SK-N-SH (cell line): ENCODE measurements at regions of chr19 and their contacts with region 1.

Region 1: DNA sequence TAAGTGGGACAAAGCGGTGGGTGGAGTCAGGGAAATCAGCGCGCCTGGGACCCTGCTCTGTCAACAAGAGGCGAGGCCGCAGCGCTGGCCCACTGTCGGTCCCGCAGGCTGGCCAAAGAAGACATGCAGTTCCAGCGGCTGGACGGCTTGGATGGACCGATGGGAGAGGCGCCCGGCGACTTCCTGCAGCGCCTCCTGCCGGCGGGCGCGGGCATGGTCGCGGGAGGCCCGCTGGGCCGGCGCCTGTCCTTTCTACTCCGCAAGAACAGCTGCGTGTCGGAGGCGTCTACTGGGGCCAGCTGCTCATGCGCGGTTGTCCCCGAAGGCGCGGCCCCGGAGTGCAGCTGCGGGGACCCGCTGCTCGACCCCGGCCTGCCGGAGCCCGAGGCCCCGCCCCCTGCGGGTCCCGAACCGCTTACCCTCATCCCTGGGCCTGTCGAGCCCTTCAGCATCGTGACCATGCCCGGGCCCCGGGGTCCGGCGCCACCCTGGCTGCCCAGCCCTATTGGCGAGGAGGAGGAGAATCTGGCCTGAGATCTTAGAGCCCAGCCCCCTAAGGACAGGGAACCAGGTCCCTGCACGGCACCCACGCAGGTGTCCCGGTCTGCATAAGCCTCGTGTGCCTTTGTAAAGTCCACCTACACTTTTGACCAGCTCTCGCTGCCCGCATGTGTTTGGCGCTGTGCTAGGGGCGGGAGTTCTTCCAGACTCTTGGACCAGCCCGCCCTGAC is 6.1 kb downstream of the BEST2 start:
- DNase-seq: peak; percentile 94
- H3K4me3 ChIP-seq: peak overlapping the region; percentile 31 to 44; a peak in 3 of 4 replicates
- H3K27ac ChIP-seq: no peak overlapping the region
- H3K4me1 ChIP-seq: no peaks in the 10 kb centered on the region; a peak in 1 of 4 replicates
- H3K27me3 ChIP-seq: peaks cover 12% of the 10 kb centered on the region; the same call in 1 of the 2 replicates
- CTCF ChIP-seq: peak; percentile 84
- EP300 ChIP-seq: no peak
- RAD21 ChIP-seq: peak; percentile 60

Region 2: GRCh38 chr19:12722566-12723380 is 34.9 kb before region 1 on chr19:
- CTCF ChIA-PET with region 1: interaction called, 24 read pairs
- POLR2A ChIA-PET with region 1: no interaction called
- DNase-seq: peak; percentile 96
- H3K4me3 ChIP-seq: peak overlapping the region; percentile 63 to 85
- H3K27ac ChIP-seq: peak overlapping the region; percentile 89
- H3K4me1 ChIP-seq: peaks cover 7 to 8% of the 10 kb centered on the region in 2 experiments; a peak in 3 of 4 replicates
- H3K27me3 ChIP-seq: no peaks in the 10 kb centered on the region
- CTCF ChIP-seq: no peak
- EP300 ChIP-seq: no peak
- RAD21 ChIP-seq: no peak

Region 3: GRCh38 chr19:12736995-12737834 is 20.5 kb before region 1 on chr19 and contains the start of gene GET3:
- CTCF ChIA-PET with region 1: interaction called, 273 read pairs
- POLR2A ChIA-PET with region 1: interaction called, 3 read pairs
- DNase-seq: peak; percentile 86
- H3K4me3 ChIP-seq: peak within 1 kb of the TSS; percentile 83 to 84
- H3K27ac ChIP-seq: peak within 1 kb of the TSS; percentile 84 to 96
- H3K4me1 ChIP-seq: peaks cover 9 to 28% of the 10 kb centered on the region in 2 experiments; a peak in 1 of 4 replicates
- H3K27me3 ChIP-seq: no peaks in the 10 kb centered on the region
- CTCF ChIP-seq: no peak
- EP300 ChIP-seq: no peak
- RAD21 ChIP-seq: no peak
- polyA plus RNA-seq, gene GET3: 250 and 264 TPM in 2 replicates

Region 4: DNA sequence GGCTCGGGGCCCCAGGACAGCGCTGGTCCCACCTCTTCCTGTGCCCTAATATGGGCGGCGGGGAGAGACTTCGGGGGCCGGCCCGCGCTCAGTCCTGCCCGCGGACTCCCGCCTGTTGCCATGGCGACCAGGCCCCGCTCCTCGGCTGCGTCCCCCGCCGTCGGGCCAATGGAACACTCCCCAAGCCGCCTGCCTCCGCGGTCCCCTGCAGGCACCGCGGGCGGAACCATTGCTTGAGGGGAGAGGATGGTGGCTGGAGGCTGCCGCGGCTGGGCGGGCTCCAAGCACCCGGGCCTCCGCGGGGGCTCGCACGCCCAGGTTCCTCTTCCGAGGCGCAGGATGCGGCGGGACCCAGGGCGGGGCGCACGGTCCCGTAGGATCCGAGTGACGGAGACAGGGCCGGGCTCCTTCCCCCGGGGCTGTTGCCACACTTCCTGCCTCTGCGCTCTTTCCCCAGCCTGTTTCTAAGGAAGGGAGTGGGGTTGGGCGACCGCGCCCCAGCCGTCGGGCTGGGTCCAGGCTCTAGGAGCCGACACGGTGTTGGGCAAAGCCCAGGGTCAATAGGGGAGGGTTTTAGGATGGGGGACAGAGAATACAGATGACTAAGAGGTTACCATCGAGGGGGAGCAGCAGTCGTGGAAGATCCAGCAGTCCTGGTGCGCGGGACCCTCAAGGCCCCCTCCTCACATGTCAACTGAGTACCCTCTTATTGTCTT is 32.4 kb after region 1 on chr19:
- CTCF ChIA-PET with region 1: interaction called, 321 read pairs
- POLR2A ChIA-PET with region 1: interaction called, 3 read pairs
- DNase-seq: peak; percentile 92
- H3K4me3 ChIP-seq: peak overlapping the region; percentile 55 to 80
- H3K27ac ChIP-seq: peak overlapping the region; percentile 96 to 97
- H3K4me1 ChIP-seq: peaks cover 38 to 53% of the 10 kb centered on the region in 2 experiments
- H3K27me3 ChIP-seq: no peaks in the 10 kb centered on the region
- CTCF ChIP-seq: no peak
- EP300 ChIP-seq: no peak
- RAD21 ChIP-seq: no peak

Region 5: DNA sequence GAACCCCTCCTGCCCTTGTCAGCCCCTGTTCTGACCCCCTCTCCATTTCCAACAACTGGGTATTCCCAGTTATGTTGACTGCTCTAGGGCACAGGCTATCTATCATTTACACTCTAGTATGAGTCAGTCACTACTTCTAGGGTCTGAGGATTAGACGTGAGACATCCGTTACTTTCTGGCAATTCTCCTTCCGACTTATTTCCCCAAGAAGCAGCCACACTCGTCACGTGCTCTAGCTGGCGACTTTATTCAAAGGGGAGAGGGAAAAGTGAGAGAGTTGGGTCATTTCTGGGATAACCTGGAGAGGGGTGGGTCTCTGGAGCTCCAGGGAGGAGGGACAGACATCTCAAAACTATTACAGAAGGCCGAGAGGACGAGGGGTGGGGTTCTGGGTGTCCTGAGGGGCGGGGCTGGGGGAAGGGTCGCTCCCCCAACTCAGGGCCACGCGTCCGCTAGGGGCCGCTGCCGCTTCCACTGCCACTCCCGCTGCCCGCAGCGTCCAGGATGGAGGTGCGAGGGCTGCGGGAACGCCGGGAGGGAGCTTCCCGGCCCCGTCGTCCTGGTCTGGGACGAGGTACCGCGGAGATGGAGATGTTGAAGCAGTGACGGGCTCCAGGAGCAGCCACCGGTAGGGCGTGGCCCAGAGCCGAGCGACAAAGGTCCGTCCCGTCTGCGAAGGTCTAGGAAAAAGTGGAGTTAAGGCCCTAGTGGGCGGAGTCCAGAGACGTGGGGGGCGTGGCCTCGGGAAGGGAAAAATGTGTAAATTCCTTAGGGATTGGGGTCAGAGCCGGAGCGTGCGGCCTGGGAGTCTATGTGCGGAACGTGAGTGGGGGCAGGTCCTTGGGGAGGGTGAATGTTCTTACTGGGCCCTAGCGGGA is 67.8 kb after region 1 on chr19:
- CTCF ChIA-PET with region 1: interaction called, 12 read pairs
- POLR2A ChIA-PET with region 1: no interaction called
- DNase-seq: peak; percentile 88
- H3K4me3 ChIP-seq: peak overlapping the region in 1 of 2 experiments; percentile 15; a peak in 1 of 4 replicates
- H3K27ac ChIP-seq: no peak overlapping the region
- H3K4me1 ChIP-seq: peaks cover 0 to 8% of the 10 kb centered on the region in 2 experiments; a peak in 1 of 4 replicates
- H3K27me3 ChIP-seq: no peaks in the 10 kb centered on the region
- CTCF ChIP-seq: peak; percentile 48
- EP300 ChIP-seq: no peak
- RAD21 ChIP-seq: peak; percentile 36

Region 6: GRCh38 chr19:13069415-13070359 is 312.0 kb after region 1 on chr19:
- CTCF ChIA-PET with region 1: no interaction called
- POLR2A ChIA-PET with region 1: no interaction called
- DNase-seq: peak; percentile 76
- H3K4me3 ChIP-seq: no peak overlapping the region
- H3K27ac ChIP-seq: peak overlapping the region in 1 of 2 experiments; percentile 92; a peak in 2 of 4 replicates
- H3K4me1 ChIP-seq: peaks cover 0 to 70% of the 10 kb centered on the region in 2 experiments; a peak in 1 of 4 replicates
- H3K27me3 ChIP-seq: no peaks in the 10 kb centered on the region
- CTCF ChIP-seq: no peak
- EP300 ChIP-seq: peak in 1 of 2 experiments; percentile 50; a peak in 2 of 4 replicates
- RAD21 ChIP-seq: 0 out of 2 replicates have a peak, but pooled peaks have one; percentile 10